Head of caudate nucleus (tissue), 42 donors: ENCODE measurements at regions of chr14 and their contacts with region 1.

Region 1: DNA sequence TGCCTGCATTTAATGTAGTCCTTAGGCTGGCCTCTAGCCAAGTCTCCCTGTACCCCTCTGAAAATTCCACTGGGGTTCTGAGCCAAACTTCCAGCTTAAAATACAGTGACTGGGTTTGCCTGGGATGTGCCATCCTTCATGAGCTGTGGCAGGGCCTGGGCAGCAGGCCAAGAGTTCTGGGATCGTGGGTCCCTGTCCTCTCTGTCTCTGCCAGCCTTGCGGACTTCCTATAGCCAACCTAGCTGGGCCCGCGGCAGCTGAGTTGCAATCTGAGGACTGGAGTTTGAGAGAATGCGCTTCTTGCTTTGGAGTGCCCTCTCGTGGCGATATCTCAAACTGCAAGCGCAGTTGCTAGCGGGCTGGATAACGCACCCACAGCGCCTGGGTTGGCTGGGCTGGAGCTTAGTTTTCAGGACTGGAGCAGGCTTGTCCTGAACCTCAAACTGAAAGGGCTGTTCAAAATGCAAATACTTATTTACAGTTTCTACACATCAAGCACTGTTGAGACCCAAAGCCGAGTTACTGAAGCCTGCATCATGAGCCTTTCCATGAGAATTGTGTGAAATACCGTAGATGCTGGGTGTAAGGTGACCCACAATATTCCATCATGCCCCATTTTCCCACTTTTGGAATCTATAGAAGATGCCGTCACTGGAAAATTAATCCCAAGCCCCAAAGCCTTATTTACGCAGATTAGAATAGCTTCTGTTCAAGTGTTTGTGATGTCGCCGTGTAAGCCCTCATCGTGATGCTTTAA is 7.3 kb upstream of the IFI27L2 start:
- DNase-seq: peak; percentile 56 to 97 (median 92)

Region 2: GRCh38 chr14:94036313-94037050 is 100.3 kb before region 1 on chr14:
- intact Hi-C with region 1: loop called (anchors 5 kb)
- DNase-seq: peak; percentile 36 to 90 (median 74)